Cardiac septum (tissue), 1 donor: ENCODE measurements at regions of chr16 and their contacts with region 1.

Region 1: GRCh38 chr16:73058221-73058615 is 10.3 kb upstream of the ZFHX3 start:
- DNase-seq: no peak

Region 2: GRCh38 chr16:72664509-72665225 is 393.6 kb before region 1 on chr16:
- intact Hi-C with region 1: loop called (anchors 10 kb)
- DNase-seq: peak; percentile 96

Region 3: DNA sequence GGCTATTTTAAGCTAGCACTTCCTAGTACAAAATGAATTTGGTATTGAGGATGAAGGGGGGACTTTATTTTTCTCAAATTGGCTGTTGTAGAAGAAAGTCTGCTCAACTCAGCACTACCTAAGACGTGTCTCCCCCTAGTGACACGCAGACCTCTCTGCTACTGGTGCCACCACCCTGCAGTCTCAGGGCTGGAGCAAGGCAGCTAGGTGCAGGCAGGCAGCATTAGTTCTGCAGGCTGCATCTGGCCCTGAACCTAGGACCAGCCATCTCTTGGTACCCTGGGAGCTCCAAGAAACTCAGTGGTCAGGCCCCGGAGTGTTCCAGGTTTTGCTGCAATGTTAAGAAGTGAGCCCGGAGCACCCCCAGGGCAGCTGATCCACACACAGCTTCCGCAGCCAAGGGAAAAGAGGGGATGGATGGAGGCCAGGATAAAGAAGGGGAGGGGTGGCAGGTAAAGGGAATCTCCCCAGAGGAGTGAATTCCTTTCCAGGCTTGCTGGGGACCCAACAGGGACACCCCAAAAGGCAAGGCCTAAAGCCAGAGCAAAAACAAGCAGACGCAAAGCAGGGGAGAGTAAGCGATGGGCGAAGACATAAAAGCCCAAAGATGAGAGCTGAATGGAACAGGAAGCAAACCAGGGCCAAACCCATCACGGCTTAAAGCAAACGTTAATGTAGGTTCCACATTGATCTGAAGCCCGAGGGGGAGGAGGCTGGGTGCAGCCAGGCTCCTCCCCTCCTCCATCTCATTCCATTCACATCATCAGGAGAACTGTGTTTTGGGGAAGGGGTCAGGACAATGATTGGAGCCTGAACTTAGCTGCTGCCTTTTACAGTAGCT is 210.8 kb before region 1 on chr16:
- intact Hi-C with region 1: loop called (anchors 5 kb)
- DNase-seq: peak; percentile 75